Activated CD4-positive, alpha-beta T cell treated with anti-CD3 and anti-CD28 coated beads for 36 hours (primary cell): ENCODE measurements at regions of chr16 and their contacts with region 1.

Region 1: DNA sequence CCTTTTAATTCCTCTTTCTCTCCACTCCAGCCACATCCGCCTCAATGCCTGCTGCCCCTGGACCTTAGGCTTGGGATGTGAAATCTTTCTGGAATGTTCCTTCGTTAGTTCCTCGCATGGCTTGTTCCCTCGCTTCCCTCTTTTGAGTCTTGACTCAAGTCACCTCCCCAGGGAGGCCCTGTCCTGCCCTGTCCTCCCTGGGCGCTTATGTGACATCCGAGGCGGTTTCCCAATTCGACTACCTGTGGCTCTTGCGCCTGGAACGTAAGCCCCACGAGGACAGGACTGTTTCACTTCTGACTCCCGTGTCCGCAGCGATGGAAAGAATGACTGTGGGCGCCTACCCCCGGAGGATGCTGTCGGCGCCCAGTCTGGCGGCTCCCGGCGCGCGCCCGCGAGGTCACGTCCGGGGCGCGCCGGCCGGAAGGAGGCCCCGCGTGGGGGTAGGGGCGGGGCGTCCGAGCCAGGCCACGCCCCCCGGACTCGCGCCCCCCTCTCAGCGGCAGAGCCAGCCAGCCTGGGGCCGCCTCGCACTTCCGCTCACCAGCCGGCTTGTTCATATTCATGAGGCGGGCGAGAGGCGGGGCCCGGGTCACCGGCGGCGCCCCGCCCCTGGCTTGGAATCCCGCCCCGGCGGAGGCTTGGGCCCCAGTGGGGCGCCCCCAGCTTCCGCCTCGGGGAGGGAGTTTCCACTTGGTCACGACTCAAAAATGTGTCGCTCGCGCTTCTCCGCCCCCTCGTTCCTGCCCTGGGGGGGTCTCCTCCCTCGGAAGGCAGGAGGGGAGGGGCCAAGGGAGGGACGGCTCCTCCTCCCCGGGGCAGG is 8.4 kb upstream of the GLIS2 start:
- DNase-seq: peak; percentile 98
- ATAC-seq: peak; percentile 92
- H3K4me3 Mint-ChIP-seq: peak overlapping the region; percentile 96
- H3K27ac Mint-ChIP-seq: peak overlapping the region; percentile 99
- H3K4me1 Mint-ChIP-seq: peaks cover 30% of the 10 kb centered on the region
- H3K27me3 Mint-ChIP-seq: no peaks in the 10 kb centered on the region

Region 2: GRCh38 chr16:4116337-4117249 is 190.8 kb before region 1 on chr16 and contains the start of gene ADCY9:
- CTCF ChIA-PET with region 1: no interaction called
- POLR2A ChIA-PET with region 1: no interaction called
- intact Hi-C with region 1: loop called in 1 of 2 experiments (anchors 1 kb)
- DNase-seq: peak; percentile 86
- ATAC-seq: peak; percentile 75
- H3K4me3 Mint-ChIP-seq: peak within 1 kb of the TSS; percentile 78
- H3K27ac Mint-ChIP-seq: peak within 1 kb of the TSS; percentile 78
- H3K4me1 Mint-ChIP-seq: peaks cover 36% of the 10 kb centered on the region
- H3K27me3 Mint-ChIP-seq: peaks cover 7% of the 10 kb centered on the region
- total RNA-seq, gene ADCY9: 5.3 to 6.2 TPM

Region 3: DNA sequence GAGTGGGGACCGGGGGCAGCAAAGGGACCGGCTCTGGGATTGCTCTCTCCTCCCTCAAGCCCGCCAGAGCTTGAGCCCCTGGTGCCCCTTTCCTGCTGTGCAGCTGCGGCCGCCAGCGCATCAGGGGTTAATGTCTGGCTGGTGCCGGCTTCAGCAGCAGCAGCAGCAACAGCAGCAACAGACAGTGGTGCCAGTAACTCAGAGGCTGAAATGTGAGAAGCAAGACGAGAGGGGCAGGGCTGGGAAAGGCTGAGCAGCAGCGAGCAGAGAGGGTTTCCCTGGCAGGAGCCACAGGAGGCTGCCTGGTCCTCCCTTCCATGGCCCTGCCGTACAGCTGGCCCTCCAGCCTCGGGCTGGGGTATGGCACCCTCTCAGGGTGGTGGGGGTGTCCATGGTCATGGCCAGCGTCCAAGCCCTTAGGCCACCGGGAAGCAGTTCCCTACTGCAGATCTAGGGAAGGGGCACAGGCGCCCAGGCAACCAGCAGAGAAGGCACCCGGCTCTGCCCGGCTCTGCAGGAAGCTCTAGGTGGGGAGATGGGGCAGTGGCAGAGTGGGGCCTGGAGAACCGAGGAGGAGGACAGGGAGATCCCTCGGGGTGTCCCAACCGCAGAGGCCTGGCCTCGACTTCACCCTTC is 13.5 kb before region 1 on chr16:
- CTCF ChIA-PET with region 1: interaction called, 41 read pairs
- POLR2A ChIA-PET with region 1: interaction called, 3 read pairs
- intact Hi-C with region 1: no loop called
- DNase-seq: no peak
- ATAC-seq: no peak
- H3K4me3 Mint-ChIP-seq: no peak overlapping the region
- H3K27ac Mint-ChIP-seq: no peak overlapping the region
- H3K4me1 Mint-ChIP-seq: no peaks in the 10 kb centered on the region
- H3K27me3 Mint-ChIP-seq: no peaks in the 10 kb centered on the region

Region 4: GRCh38 chr16:4402439-4403132 is 95.2 kb after region 1 on chr16:
- CTCF ChIA-PET with region 1: interaction called, 13 read pairs
- POLR2A ChIA-PET with region 1: no interaction called
- intact Hi-C with region 1: no loop called
- DNase-seq: peak; percentile 84
- ATAC-seq: peak; percentile 82
- H3K4me3 Mint-ChIP-seq: no peak overlapping the region
- H3K27ac Mint-ChIP-seq: no peak overlapping the region
- H3K4me1 Mint-ChIP-seq: no peaks in the 10 kb centered on the region
- H3K27me3 Mint-ChIP-seq: no peaks in the 10 kb centered on the region

Region 5: GRCh38 chr16:4538350-4539235 is 231.2 kb after region 1 on chr16 and contains the start of gene CDIP1:
- CTCF ChIA-PET with region 1: no interaction called
- POLR2A ChIA-PET with region 1: no interaction called
- intact Hi-C with region 1: loop called in 1 of 2 experiments (anchors 1 kb)
- DNase-seq: peak; percentile 99
- ATAC-seq: peak; percentile 81
- H3K4me3 Mint-ChIP-seq: peak within 1 kb of the TSS; percentile 75
- H3K27ac Mint-ChIP-seq: peak within 1 kb of the TSS; percentile 63
- H3K4me1 Mint-ChIP-seq: peaks cover 41% of the 10 kb centered on the region
- H3K27me3 Mint-ChIP-seq: no peaks in the 10 kb centered on the region
- total RNA-seq, gene CDIP1: 28.3 to 30.2 TPM

Region 6: DNA sequence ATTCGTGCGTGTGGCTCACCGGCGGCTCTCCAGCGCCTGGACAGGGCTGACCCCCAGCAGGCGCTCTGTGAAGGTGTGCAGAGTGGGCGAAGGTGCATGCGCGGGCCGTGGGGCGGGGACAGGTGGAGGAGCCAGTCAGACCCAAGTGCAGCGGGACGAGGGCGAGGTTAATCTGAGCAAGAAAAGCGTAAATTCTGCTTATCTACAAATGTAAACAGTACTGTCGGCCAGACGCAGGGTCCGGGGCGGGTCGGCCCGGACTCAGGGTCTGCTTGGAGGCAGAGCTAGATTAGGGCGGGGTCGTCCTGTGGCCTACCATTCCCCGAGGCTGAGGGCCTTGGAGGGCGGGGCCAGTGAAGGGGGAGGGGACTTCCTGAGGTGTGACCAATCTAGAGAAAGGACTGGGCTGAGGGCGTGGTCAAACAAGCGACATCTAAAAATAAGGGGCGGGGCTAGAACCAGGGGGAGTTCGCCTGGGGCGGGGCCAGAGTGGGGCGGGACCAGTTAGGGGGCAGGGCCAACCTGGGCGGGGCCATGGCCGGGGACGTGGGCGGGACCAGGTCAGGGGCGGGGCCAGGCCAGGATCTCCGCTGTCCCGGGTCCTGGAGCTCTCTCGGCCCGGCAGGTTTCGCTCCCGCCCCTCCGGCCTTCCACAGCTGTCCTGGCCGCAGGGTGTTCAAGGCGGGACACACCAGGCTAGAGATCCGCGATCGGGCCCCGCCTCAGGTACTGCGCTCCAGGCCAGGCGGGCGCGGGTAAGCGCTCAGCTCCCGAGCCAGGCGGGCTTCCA is 650.5 kb after region 1 on chr16 and contains the start of gene SEC14L5:
- CTCF ChIA-PET with region 1: interaction called, 4 read pairs
- POLR2A ChIA-PET with region 1: no interaction called
- intact Hi-C with region 1: loop called in 1 of 2 experiments (anchors 5 kb)
- DNase-seq: peak; percentile 98
- ATAC-seq: peak; percentile 95
- H3K4me3 Mint-ChIP-seq: peak within 1 kb of the TSS; percentile 75
- H3K27ac Mint-ChIP-seq: peak within 1 kb of the TSS; percentile 1
- H3K4me1 Mint-ChIP-seq: peaks cover 12% of the 10 kb centered on the region
- H3K27me3 Mint-ChIP-seq: peaks cover 33% of the 10 kb centered on the region
- total RNA-seq, gene SEC14L5: 0.09 to 0.28 TPM